SK-N-SH (cell line): ENCODE measurements at regions of chr11 and their contacts with region 1.

Region 1: GRCh38 chr11:66386171-66387069 is 14.9 kb upstream of the SLC29A2 start:
- DNase-seq: peak; percentile 71
- H3K4me3 ChIP-seq: peak overlapping the region; percentile 23 to 60
- H3K27ac ChIP-seq: no peak overlapping the region
- H3K4me1 ChIP-seq: no peaks in the 10 kb centered on the region; a peak in 1 of 4 replicates
- H3K27me3 ChIP-seq: peaks cover 13% of the 10 kb centered on the region; the same call in 1 of the 2 replicates
- CTCF ChIP-seq: peak; percentile 96
- EP300 ChIP-seq: no peak
- RAD21 ChIP-seq: peak; percentile 70

Region 2: GRCh38 chr11:66311965-66312548 is 74.4 kb before region 1 on chr11:
- CTCF ChIA-PET with region 1: interaction called, 41 read pairs
- POLR2A ChIA-PET with region 1: interaction called, 3 read pairs
- DNase-seq: peak; percentile 88
- H3K4me3 ChIP-seq: peak overlapping the region; percentile 59 to 70
- H3K27ac ChIP-seq: peak overlapping the region; percentile 94 to 96
- H3K4me1 ChIP-seq: peaks cover 11 to 49% of the 10 kb centered on the region in 2 experiments; a peak in 2 of 4 replicates
- H3K27me3 ChIP-seq: no peaks in the 10 kb centered on the region
- CTCF ChIP-seq: peak; percentile 98
- EP300 ChIP-seq: no peak
- RAD21 ChIP-seq: peak; percentile 97

Region 3: DNA sequence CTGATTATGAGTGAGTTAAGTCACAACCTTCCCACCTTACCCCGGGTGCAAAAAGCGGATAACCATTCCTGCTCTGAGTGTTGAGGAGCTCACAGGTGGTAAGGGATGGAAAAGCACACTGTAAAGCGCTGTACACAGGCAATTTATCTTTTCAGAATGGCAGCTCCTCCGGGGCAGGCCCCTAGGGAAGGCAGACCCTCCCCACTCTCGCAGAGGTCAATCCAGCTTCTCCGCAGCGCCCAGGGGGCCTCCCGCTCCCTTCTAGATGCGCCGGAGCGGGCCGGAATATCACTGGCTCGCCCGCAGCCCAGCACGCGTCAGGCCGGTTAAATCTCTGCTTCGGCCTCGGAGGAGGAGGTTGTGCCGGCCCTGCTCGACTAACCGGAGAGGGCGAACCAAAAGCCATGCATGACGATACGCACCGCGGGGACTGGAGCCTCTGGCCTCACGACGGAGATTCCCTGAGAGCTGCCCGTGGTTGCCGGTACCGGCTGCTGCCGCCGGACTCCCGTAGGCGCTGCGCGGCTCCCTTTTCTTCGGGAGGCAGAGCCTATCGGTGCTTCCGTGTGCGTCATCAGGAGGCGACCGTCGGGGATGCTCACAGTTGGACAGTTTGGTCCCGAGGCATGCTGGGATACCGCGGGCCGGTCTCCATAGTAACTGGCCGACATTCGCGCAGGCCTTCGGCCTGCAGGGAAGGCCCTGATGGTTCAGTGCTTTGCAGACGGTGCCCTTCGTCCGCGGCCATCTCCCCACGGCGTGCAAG is 41.7 kb before region 1 on chr11 and contains the start of gene BRMS1:
- CTCF ChIA-PET with region 1: interaction called, 21 read pairs
- POLR2A ChIA-PET with region 1: no interaction called
- DNase-seq: peak; percentile 93
- H3K4me3 ChIP-seq: peak within 1 kb of the TSS; percentile 95 to 96
- H3K27ac ChIP-seq: peak within 1 kb of the TSS; percentile 72 to 85
- H3K4me1 ChIP-seq: peaks cover 24 to 37% of the 10 kb centered on the region in 2 experiments; a peak in 3 of 4 replicates
- H3K27me3 ChIP-seq: no peaks in the 10 kb centered on the region
- CTCF ChIP-seq: no peak
- EP300 ChIP-seq: no peak
- RAD21 ChIP-seq: no peak
- polyA plus RNA-seq, gene BRMS1: 70.0 and 76.5 TPM in 2 replicates

Region 4: GRCh38 chr11:66371627-66372415 is 14.6 kb before region 1 on chr11 and contains the start of gene SLC29A2:
- CTCF ChIA-PET with region 1: interaction called, 55 read pairs
- POLR2A ChIA-PET with region 1: no interaction called
- DNase-seq: peak; percentile 91
- H3K4me3 ChIP-seq: peak within 1 kb of the TSS; percentile 65 to 75
- H3K27ac ChIP-seq: peak within 1 kb of the TSS in 1 of 2 experiments; percentile 78; a peak in 2 of 4 replicates
- H3K4me1 ChIP-seq: peaks cover 6 to 9% of the 10 kb centered on the region in 2 experiments; a peak in 2 of 4 replicates
- H3K27me3 ChIP-seq: peaks cover 18% of the 10 kb centered on the region; the same call in 1 of the 2 replicates
- CTCF ChIP-seq: no peak
- EP300 ChIP-seq: no peak
- RAD21 ChIP-seq: no peak
- polyA plus RNA-seq, gene SLC29A2: 3.2 and 3.7 TPM in 2 replicates

Region 5: GRCh38 chr11:66414120-66414934 is 27.9 kb after region 1 on chr11:
- CTCF ChIA-PET with region 1: interaction called, 42 read pairs
- POLR2A ChIA-PET with region 1: no interaction called
- DNase-seq: no peak
- H3K4me3 ChIP-seq: no peak overlapping the region
- H3K27ac ChIP-seq: no peak overlapping the region
- H3K4me1 ChIP-seq: peaks cover 3 to 4% of the 10 kb centered on the region in 2 experiments; a peak in 2 of 4 replicates
- H3K27me3 ChIP-seq: peaks cover 13% of the 10 kb centered on the region; the same call in 1 of the 2 replicates
- CTCF ChIP-seq: no peak
- EP300 ChIP-seq: no peak
- RAD21 ChIP-seq: no peak

Region 6: DNA sequence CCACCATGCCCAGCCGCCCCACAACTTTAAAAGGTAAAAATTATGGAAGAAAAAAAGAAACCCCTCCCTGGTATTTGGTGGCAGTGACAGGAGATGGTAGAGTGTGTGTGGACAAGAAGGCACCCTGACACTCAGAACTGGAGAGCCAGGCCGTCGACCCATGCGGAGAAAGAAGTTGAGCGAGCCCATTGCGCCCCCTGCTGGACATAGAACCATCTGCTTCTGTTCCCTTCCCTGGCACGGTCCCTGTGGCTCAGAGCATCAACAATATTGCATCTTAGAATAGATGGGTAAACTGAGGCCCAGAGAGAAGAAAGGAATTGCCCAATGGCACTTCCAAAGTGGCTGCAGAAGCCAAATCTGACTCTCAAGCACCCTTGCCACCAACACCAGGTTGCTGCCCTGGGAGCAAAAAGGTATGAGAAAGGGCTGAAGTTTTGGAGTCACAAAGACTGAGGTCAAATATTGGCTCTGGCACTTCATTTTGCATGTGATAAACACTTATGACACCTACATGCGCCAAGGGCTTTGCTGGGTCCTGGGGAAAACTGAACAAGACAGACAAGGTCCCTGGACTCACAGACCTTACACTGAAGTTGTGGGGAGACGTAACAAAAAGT is 43.7 kb after region 1 on chr11:
- CTCF ChIA-PET with region 1: interaction called, 19 read pairs
- POLR2A ChIA-PET with region 1: no interaction called
- DNase-seq: peak; percentile 88
- H3K4me3 ChIP-seq: no peak overlapping the region; a peak in 1 of 4 replicates
- H3K27ac ChIP-seq: no peak overlapping the region
- H3K4me1 ChIP-seq: no peaks in the 10 kb centered on the region
- H3K27me3 ChIP-seq: no peaks in the 10 kb centered on the region
- CTCF ChIP-seq: peak; percentile 84
- EP300 ChIP-seq: no peak
- RAD21 ChIP-seq: peak; percentile 93

Region 7: DNA sequence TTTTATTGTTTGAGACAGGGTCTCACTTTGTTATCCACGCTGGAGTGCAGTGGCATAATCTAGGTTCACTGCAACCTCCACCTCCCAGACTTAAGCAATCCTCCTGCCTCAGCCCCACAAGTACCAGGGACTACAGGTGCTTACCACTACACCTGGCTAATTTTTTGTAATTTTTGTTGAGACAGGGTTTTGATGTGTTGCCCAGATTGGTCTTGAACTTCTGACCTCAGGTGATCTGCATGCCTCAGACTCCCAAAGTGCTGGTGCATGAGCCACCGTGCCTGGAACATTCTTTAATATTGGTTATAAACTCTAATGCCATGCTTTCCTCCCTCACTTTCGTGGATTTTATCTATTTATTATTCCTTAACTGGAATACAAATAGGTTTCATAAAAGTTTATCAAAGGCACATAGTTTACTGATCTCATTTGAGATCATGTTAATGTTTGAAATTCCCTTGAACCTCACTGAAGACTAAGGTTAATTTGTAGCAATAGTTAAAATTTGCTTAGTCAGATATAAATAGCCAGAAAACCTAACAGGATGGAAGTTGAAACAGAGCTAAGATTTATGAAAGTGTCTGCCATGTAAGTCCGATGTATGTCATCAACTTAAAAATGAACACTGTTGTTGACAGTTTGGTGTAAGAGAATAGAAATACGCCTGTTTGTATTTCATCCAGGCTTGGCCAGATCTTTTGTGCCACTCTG is 760.3 kb after region 1 on chr11:
- CTCF ChIA-PET with region 1: no interaction called
- POLR2A ChIA-PET with region 1: no interaction called
- DNase-seq: no peak
- H3K4me3 ChIP-seq: no peak overlapping the region
- H3K27ac ChIP-seq: no peak overlapping the region
- H3K4me1 ChIP-seq: peaks cover 0 to 4% of the 10 kb centered on the region in 2 experiments; a peak in 1 of 4 replicates
- H3K27me3 ChIP-seq: no peaks in the 10 kb centered on the region
- CTCF ChIP-seq: no peak
- EP300 ChIP-seq: no peak
- RAD21 ChIP-seq: no peak